BJ (cell line): ENCODE measurements at regions of chr9 and their contacts with region 1.

Region 1: DNA sequence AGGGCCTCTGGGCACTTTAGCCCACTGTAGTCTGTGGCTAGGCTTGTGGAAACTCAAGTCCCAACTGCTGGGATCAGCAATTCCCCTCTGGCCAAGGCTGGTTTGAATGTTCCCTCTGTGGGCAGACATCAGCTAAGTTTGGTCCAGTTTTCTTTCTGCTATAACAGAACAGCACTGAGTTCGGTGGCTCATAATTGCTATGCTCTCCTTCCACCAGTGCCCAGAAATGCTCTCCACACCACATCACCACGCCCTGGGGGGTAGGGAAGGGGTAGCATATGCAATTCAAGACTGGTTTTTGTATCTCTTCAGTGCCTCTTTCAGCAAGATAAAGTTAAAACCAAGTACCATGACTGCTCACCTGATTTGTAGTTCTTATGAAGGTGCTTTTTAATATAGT is 45.5 kb downstream of the GDA start:
- DNase-seq: no peak
- H3K4me3 ChIP-seq: no peak overlapping the region
- H3K27me3 ChIP-seq: no peaks in the 10 kb centered on the region
- CTCF ChIP-seq: no peak

Region 2: GRCh38 chr9:72140582-72140981 is 54.2 kb before region 1 on chr9:
- CTCF ChIA-PET with region 1: no interaction called
- POLR2A ChIA-PET with region 1: interaction called, 11 read pairs
- DNase-seq: no peak
- H3K4me3 ChIP-seq: no peak overlapping the region
- H3K27me3 ChIP-seq: no peaks in the 10 kb centered on the region
- CTCF ChIP-seq: no peak